ENCODE measurements at regions of chr2 and their contacts with region 1.

Region 1: DNA sequence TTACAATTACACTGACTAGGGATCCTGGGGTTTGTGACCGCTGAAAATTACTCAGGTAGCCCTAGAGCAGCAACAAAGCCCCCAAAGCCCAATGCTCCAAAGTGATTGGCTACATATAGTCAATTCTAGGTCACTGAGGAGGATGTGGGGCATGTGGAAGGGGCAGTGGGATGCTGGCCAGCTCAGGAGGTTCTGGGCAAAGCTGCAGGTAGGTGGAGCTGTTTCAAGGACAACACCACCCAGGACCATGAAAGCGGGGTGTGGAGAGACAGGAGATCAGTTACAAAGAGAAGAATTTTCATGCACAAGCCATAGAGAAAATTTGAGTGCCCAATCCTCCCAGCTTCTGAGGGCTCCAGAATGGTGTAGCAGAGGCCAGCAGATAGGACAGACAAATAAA is 75.0 kb upstream of the CCDC85A start:
- ATAC-seq: peak in 1 of 8 experiments; percentile 14
- H3K4me3 ChIP-seq: no peak overlapping the region
- H3K27ac ChIP-seq: peak overlapping the region in 1 of 2 donors; percentile 27
- H3K4me1 ChIP-seq: peaks cover 40% of the 10 kb centered on the region in 2 donors

Region 2: GRCh38 chr2:56009758-56010458 is 98.9 kb before region 1 on chr2:
- in situ Hi-C with region 1: loop called in 1 of 9 experiments (anchors 25 kb)
- ATAC-seq: no peak
- H3K4me3 ChIP-seq: no peak overlapping the region
- H3K27ac ChIP-seq: no peak overlapping the region
- H3K4me1 ChIP-seq: peaks cover 27 to 40% of the 10 kb centered on the region in 2 donors

Region 3: GRCh38 chr2:56068746-56069145 is 40.1 kb before region 1 on chr2:
- in situ Hi-C with region 1: no loop called
- ATAC-seq: no peak
- H3K4me3 ChIP-seq: no peak overlapping the region
- H3K27ac ChIP-seq: no peak overlapping the region
- H3K4me1 ChIP-seq: no peaks in the 10 kb centered on the region

Region 4: GRCh38 chr2:56376699-56377665 is 268.2 kb after region 1 on chr2:
- in situ Hi-C with region 1: no loop called
- ATAC-seq: peak in 3 of 8 experiments; percentile 43 to 91 (median 90)
- H3K4me3 ChIP-seq: no peak overlapping the region
- H3K27ac ChIP-seq: no peak overlapping the region
- H3K4me1 ChIP-seq: no peaks in the 10 kb centered on the region

Measured in motor neuron (in vitro differentiated cells).